CD8-positive, alpha-beta T cell (primary cell): ENCODE measurements at regions of chr20 and their contacts with region 1.

Region 1: GRCh38 chr20:8043687-8044282 is 24.2 kb upstream of the TMX4 start:
- DNase-seq: peak in 3 of 9 experiments; percentile 45 to 80 (median 73)
- ATAC-seq: peak; percentile 71
- H3K4me3 ChIP-seq: no peak overlapping the region
- H3K4me3 Mint-ChIP-seq: no peak overlapping the region
- H3K27ac ChIP-seq: no peak overlapping the region
- H3K27ac Mint-ChIP-seq: no peak overlapping the region
- H3K4me1 ChIP-seq: no peaks in the 10 kb centered on the region
- H3K4me1 Mint-ChIP-seq: peaks cover 2% of the 10 kb centered on the region
- H3K27me3 ChIP-seq: no peaks in the 10 kb centered on the region
- H3K27me3 Mint-ChIP-seq: peaks cover 9% of the 10 kb centered on the region
- CTCF ChIP-seq: peak; percentile 95

Region 2: DNA sequence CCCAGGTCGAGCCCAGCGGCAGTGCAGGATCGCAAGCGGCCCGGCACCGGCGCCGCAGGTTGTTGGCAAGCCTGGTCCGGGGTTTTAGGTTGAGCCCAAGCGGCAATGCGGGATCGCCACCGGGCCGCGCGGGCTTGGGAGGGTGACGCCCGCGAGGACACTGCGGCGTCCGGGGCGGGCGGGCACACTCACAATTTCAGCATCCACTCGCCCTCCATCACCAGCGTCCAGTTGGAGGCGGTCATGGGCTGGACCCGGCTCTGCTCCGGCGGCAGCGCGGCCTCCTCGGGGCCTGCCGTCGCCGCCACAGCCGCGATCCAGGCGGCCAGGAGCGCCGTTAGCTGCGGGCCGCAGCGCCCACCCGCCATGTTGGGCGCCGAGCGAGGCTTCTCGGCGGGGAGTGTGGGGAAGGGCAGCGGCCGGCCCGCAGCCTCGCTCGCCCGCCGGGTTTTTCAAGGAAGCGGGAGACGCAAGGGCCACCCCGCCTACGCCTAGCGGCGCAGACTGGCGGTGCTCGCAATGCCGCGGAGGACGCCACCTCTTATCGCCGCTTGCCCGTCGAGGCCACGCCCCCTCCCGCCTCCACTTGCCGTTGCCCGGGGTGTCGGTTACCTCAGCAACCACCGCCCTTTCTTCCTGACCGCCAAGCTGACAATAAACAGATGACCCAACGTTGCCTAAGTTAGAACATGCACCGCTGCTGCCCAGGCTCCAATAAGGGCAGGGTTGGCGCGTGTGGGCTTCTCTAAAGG is 24.4 kb before region 1 on chr20 and contains the start of gene TMX4:
- CTCF ChIA-PET with region 1: interaction called, 11 read pairs
- POLR2A ChIA-PET with region 1: no interaction called
- intact Hi-C with region 1: loop called in 1 of 2 experiments (anchors 2 kb)
- DNase-seq: peak; percentile 72 to 94 (median 88)
- ATAC-seq: peak; percentile 78
- H3K4me3 ChIP-seq: peak within 1 kb of the TSS; percentile 49 to 68
- H3K4me3 Mint-ChIP-seq: peak within 1 kb of the TSS; percentile 94
- H3K27ac ChIP-seq: peak within 1 kb of the TSS; percentile 70 to 81
- H3K27ac Mint-ChIP-seq: peak within 1 kb of the TSS; percentile 93
- H3K4me1 ChIP-seq: peaks cover 25% of the 10 kb centered on the region
- H3K4me1 Mint-ChIP-seq: peaks cover 33% of the 10 kb centered on the region
- H3K27me3 ChIP-seq: no peaks in the 10 kb centered on the region
- H3K27me3 Mint-ChIP-seq: no peaks in the 10 kb centered on the region
- CTCF ChIP-seq: no peak
- total RNA-seq, gene TMX4: 45.6 to 47.9 TPM

Region 3: DNA sequence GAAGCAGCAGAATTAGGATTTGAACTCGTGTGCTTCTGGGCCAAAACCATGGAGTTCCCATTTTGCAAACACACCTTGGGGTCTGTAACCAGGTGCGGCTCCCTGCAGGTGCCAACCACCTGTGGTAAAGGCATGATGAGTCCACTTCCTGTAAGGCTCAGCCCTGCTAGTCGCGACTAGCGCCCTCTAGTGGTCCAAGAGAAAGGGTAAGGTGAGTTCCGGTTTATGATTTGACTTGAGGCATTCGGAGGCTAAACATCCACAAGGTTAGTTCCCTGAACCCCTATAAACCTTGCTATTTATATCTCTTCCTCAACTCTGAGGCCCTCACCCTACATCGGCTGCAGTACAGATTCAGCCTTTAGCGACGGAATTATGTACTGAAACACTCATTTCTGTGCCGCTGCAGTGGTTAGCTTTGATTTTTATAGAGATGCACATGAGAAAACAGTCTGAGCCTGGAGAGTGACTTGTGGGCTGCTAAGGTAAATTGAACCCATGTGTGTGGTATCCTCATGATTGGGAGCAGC is 261.7 kb after region 1 on chr20:
- CTCF ChIA-PET with region 1: interaction called, 3 read pairs
- POLR2A ChIA-PET with region 1: no interaction called
- intact Hi-C with region 1: loop called (anchors 1 to 5 kb)
- DNase-seq: peak; percentile 16 to 88 (median 69)
- ATAC-seq: peak; percentile 97
- H3K4me3 ChIP-seq: no peak overlapping the region
- H3K4me3 Mint-ChIP-seq: no peak overlapping the region
- H3K27ac ChIP-seq: no peak overlapping the region
- H3K27ac Mint-ChIP-seq: no peak overlapping the region
- H3K4me1 ChIP-seq: peaks cover 6% of the 10 kb centered on the region
- H3K4me1 Mint-ChIP-seq: peaks cover 7% of the 10 kb centered on the region
- H3K27me3 ChIP-seq: no peaks in the 10 kb centered on the region
- H3K27me3 Mint-ChIP-seq: no peaks in the 10 kb centered on the region
- CTCF ChIP-seq: peak; percentile 67

Region 4: GRCh38 chr20:8331740-8332412 is 288.1 kb after region 1 on chr20:
- CTCF ChIA-PET with region 1: no interaction called
- POLR2A ChIA-PET with region 1: no interaction called
- intact Hi-C with region 1: no loop called
- DNase-seq: no peak
- ATAC-seq: no peak
- H3K4me3 ChIP-seq: no peak overlapping the region
- H3K4me3 Mint-ChIP-seq: no peak overlapping the region
- H3K27ac ChIP-seq: no peak overlapping the region
- H3K27ac Mint-ChIP-seq: no peak overlapping the region
- H3K4me1 ChIP-seq: no peaks in the 10 kb centered on the region
- H3K4me1 Mint-ChIP-seq: peaks cover 2% of the 10 kb centered on the region
- H3K27me3 ChIP-seq: no peaks in the 10 kb centered on the region
- H3K27me3 Mint-ChIP-seq: no peaks in the 10 kb centered on the region
- CTCF ChIP-seq: no peak

Region 5: GRCh38 chr20:8389381-8390036 is 345.7 kb after region 1 on chr20:
- CTCF ChIA-PET with region 1: interaction called, 32 read pairs
- POLR2A ChIA-PET with region 1: interaction called, 4 read pairs
- intact Hi-C with region 1: loop called (anchors 1 to 2 kb)
- DNase-seq: peak in 2 of 9 experiments; percentile 52 to 62
- ATAC-seq: peak; percentile 34
- H3K4me3 ChIP-seq: no peak overlapping the region
- H3K4me3 Mint-ChIP-seq: no peak overlapping the region
- H3K27ac ChIP-seq: no peak overlapping the region
- H3K27ac Mint-ChIP-seq: no peak overlapping the region
- H3K4me1 ChIP-seq: no peaks in the 10 kb centered on the region
- H3K4me1 Mint-ChIP-seq: peaks cover 3% of the 10 kb centered on the region
- H3K27me3 ChIP-seq: no peaks in the 10 kb centered on the region
- H3K27me3 Mint-ChIP-seq: no peaks in the 10 kb centered on the region
- CTCF ChIP-seq: peak; percentile 74